MCF 10A (cell line): ENCODE measurements at regions of chr16 and their contacts with region 1.

Region 1: DNA sequence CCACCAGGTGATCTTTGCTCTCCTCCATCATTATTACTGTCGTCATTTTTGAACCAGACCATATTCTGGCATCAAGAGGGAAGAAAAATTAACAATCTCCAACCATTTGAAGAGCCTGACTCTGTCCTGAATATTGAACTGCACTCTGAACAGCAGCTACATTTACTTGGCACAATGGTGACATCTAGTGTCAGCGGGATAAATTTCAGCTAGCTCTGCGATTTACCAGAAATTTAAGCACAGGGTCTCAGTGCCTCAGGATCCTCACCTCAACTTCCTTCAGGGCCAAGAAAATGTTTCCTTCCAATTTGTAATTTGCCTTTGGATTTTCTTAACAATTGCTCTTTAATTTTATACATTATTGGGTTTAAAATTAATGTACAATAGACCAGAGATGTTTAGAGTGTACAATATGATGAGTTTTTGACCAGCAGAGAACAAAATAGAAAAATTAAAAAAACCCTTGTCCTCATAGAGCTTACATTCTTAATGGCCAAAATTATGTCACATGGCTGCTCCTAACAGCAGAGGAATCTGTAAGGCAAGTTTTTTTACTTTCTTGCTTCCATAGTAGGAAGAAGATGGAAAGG is 10.7 kb upstream of the ZNF19 start:
- DNase-seq: peak; percentile 56
- H3K4me3 Mint-ChIP-seq: no peak overlapping the region
- H3K27ac Mint-ChIP-seq: no peak overlapping the region
- H3K4me1 Mint-ChIP-seq: peaks cover 2% of the 10 kb centered on the region
- H3K27me3 Mint-ChIP-seq: peaks cover 9% of the 10 kb centered on the region
- CTCF ChIP-seq: peak; percentile 73

Region 2: DNA sequence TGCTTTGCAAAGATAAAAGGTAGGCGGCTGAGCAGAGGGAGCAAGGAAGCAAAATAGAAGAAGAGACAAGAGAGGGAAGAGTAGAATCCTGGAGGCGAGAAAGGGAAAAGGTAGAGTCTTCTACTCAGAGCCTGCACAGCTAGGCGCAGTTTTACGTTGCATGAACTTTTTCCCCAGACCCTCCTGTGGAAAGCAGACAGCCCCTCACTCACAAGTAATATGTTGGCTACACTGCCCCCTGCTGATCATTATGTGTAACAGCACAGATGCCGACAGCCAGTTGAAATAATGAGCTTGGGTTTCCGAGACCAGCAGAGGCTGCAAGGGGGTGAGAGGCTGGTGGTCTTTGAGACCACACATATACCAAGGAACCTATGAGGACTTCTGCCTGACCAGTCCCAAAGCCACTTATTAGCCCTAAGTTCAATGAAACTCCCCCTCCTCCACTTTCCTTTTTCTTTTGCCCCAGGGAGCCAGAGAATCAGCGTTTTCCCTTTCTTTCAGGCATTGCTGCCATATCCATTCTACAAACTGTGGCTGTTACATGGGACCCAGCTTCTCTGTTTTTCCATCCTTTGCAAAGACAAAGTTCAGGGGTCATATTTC is 188.2 kb before region 1 on chr16:
- CTCF ChIA-PET with region 1: interaction called, 12 read pairs
- POLR2A ChIA-PET with region 1: no interaction called
- intact Hi-C with region 1: no loop called
- DNase-seq: peak; percentile 49
- H3K4me3 Mint-ChIP-seq: no peak overlapping the region
- H3K27ac Mint-ChIP-seq: no peak overlapping the region
- H3K4me1 Mint-ChIP-seq: no peaks in the 10 kb centered on the region
- H3K27me3 Mint-ChIP-seq: peaks cover 40% of the 10 kb centered on the region
- CTCF ChIP-seq: peak; percentile 81

Region 3: GRCh38 chr16:71461686-71462648 is 37.9 kb before region 1 on chr16 and contains the start of gene ZNF23:
- CTCF ChIA-PET with region 1: interaction called, 20 read pairs
- POLR2A ChIA-PET with region 1: interaction called, 8 read pairs
- intact Hi-C with region 1: no loop called
- DNase-seq: peak; percentile 68
- H3K4me3 Mint-ChIP-seq: peak within 1 kb of the TSS; percentile 89
- H3K27ac Mint-ChIP-seq: peak within 1 kb of the TSS; percentile 82
- H3K4me1 Mint-ChIP-seq: peaks cover 5% of the 10 kb centered on the region
- H3K27me3 Mint-ChIP-seq: no peaks in the 10 kb centered on the region
- CTCF ChIP-seq: peak; percentile 4
- total RNA-seq, gene ZNF23: 12.6 and 13.7 TPM in 2 replicates

Region 4: GRCh38 chr16:71526111-71526631 is 26.3 kb after region 1 on chr16 and contains the start of gene CHST4:
- CTCF ChIA-PET with region 1: interaction called, 20 read pairs
- POLR2A ChIA-PET with region 1: no interaction called
- intact Hi-C with region 1: no loop called
- DNase-seq: peak; percentile 70
- H3K4me3 Mint-ChIP-seq: no peak within 1 kb of the TSS
- H3K27ac Mint-ChIP-seq: no peak within 1 kb of the TSS
- H3K4me1 Mint-ChIP-seq: peaks cover 10% of the 10 kb centered on the region
- H3K27me3 Mint-ChIP-seq: no peaks in the 10 kb centered on the region
- CTCF ChIP-seq: no peak
- total RNA-seq, gene CHST4: 0.14 TPM in 1 of 2 replicates, not detected in the other

Region 5: GRCh38 chr16:71537643-71538042 is 37.8 kb after region 1 on chr16:
- CTCF ChIA-PET with region 1: interaction called, 82 read pairs
- POLR2A ChIA-PET with region 1: no interaction called
- intact Hi-C with region 1: loop called (anchors 1 kb)
- DNase-seq: peak; percentile 69
- H3K4me3 Mint-ChIP-seq: no peak overlapping the region
- H3K27ac Mint-ChIP-seq: no peak overlapping the region
- H3K4me1 Mint-ChIP-seq: no peaks in the 10 kb centered on the region
- H3K27me3 Mint-ChIP-seq: peaks cover 11% of the 10 kb centered on the region
- CTCF ChIP-seq: peak; percentile 76